ENCODE measurements at regions of chr2 and their contacts with region 1.

Region 1: GRCh38 chr2:31333527-31334183 is 80.9 kb downstream of the XDH start:
- DNase-seq: peak; percentile 60 to 69 (median 66)
- H3K4me3 ChIP-seq: no peak overlapping the region
- H3K4me3 Mint-ChIP-seq: peak overlapping the region in 1 of 2 donors; percentile 6
- H3K27ac ChIP-seq: no peak overlapping the region
- H3K27ac Mint-ChIP-seq: no peak overlapping the region
- H3K4me1 ChIP-seq: no peaks in the 10 kb centered on the region
- H3K4me1 Mint-ChIP-seq: no peaks in the 10 kb centered on the region
- H3K27me3 ChIP-seq: no peaks in the 10 kb centered on the region
- H3K27me3 Mint-ChIP-seq: peaks cover 0 to 2% (median 1%) of the 10 kb centered on the region in 3 donors
- CTCF ChIP-seq: peak; percentile 96

Region 2: GRCh38 chr2:31221544-31221943 is 112.1 kb before region 1 on chr2:
- intact Hi-C with region 1: loop called in 1 of 2 experiments (anchors 5 kb)
- DNase-seq: peak in 1 of 3 donors; percentile 21
- H3K4me3 ChIP-seq: no peak overlapping the region
- H3K4me3 Mint-ChIP-seq: no peak overlapping the region
- H3K27ac ChIP-seq: no peak overlapping the region
- H3K27ac Mint-ChIP-seq: peak overlapping the region in 3 of 7 donors; percentile 51 to 68 (median 61)
- H3K4me1 ChIP-seq: peaks cover 34 to 39% of the 10 kb centered on the region in 2 donors
- H3K4me1 Mint-ChIP-seq: peaks cover 43% of the 10 kb centered on the region
- H3K27me3 ChIP-seq: no peaks in the 10 kb centered on the region
- H3K27me3 Mint-ChIP-seq: peaks cover 1 to 3% (median 3%) of the 10 kb centered on the region in 3 donors
- CTCF ChIP-seq: no peak

Measured in CD14-positive monocyte (primary cell).